ENCODE measurements at regions of chr1 and their contacts with region 1.

Region 1: DNA sequence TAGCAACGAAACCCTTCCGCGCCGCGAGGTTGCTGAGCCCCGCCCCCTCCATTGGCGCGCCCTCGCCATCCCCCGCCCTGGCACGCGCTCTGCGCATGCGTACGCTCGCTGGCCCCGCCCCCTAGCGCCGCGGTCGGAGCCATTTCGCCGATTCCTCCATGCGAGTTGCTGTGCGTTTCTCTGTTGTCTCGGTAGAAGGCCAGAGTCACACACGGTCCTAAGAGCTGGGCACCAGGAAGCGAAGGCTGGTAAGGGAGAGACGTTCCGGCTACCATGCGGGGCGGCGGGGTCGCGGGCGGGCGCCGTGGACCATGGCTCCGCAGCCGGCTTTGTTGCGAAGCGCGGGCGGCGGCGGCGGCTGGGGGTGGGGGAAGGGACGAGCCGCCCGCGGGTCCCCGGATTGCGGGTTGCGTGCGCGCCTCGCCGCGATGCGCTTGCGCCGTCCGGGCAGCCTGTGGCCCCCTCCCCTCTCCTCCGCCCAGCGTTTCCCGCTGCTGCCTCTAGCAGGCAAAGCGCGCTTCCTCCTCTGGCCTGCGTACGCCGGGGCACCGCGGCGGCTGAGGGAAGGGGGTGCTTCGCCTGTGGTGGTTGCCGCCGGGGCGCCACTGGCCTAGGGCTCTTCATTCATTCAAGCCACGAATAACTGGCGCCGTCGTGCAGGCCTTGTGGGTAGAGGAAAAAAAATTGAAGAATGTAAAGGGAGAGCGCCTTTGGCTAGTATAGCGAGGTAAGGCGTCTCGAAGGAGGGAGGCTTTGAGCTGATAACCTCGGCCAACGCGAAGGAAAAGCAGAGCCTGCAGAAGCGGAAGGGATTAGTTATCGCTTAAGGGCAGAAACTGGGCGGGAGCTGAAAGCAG is at the start of gene DHX9:
- DNase-seq: peak; percentile 99
- ATAC-seq: peak; percentile 82
- H3K4me3 Mint-ChIP-seq: peak within 1 kb of the TSS; percentile 92
- H3K27ac Mint-ChIP-seq: peak within 1 kb of the TSS; percentile 98
- H3K4me1 Mint-ChIP-seq: peaks cover 39% of the 10 kb centered on the region
- H3K27me3 Mint-ChIP-seq: no peaks in the 10 kb centered on the region
- CTCF ChIP-seq: no peak
- total RNA-seq, gene DHX9: 265 and 266 TPM in 2 replicates

Region 2: GRCh38 chr1:182029379-182030331 is 809.8 kb before region 1 on chr1:
- CTCF ChIA-PET with region 1: no interaction called
- POLR2A ChIA-PET with region 1: no interaction called
- intact Hi-C with region 1: loop called (anchors 5 kb)
- DNase-seq: peak; percentile 98
- ATAC-seq: peak; percentile 94
- H3K4me3 Mint-ChIP-seq: peak overlapping the region; percentile 97
- H3K27ac Mint-ChIP-seq: peak overlapping the region; percentile 97
- H3K4me1 Mint-ChIP-seq: peaks cover 15% of the 10 kb centered on the region
- H3K27me3 Mint-ChIP-seq: no peaks in the 10 kb centered on the region
- CTCF ChIP-seq: no peak

Region 3: GRCh38 chr1:182588500-182589452 is 250.7 kb before region 1 on chr1 and contains the start of gene RNASEL:
- CTCF ChIA-PET with region 1: no interaction called
- POLR2A ChIA-PET with region 1: no interaction called
- intact Hi-C with region 1: loop called (anchors 5 kb)
- DNase-seq: peak; percentile 39
- ATAC-seq: peak; percentile 90
- H3K4me3 Mint-ChIP-seq: peak within 1 kb of the TSS; percentile 92
- H3K27ac Mint-ChIP-seq: peak within 1 kb of the TSS; percentile 96
- H3K4me1 Mint-ChIP-seq: peaks cover 52% of the 10 kb centered on the region
- H3K27me3 Mint-ChIP-seq: no peaks in the 10 kb centered on the region
- CTCF ChIP-seq: no peak
- total RNA-seq, gene RNASEL: 10.0 and 11.1 TPM in 2 replicates

Region 4: DNA sequence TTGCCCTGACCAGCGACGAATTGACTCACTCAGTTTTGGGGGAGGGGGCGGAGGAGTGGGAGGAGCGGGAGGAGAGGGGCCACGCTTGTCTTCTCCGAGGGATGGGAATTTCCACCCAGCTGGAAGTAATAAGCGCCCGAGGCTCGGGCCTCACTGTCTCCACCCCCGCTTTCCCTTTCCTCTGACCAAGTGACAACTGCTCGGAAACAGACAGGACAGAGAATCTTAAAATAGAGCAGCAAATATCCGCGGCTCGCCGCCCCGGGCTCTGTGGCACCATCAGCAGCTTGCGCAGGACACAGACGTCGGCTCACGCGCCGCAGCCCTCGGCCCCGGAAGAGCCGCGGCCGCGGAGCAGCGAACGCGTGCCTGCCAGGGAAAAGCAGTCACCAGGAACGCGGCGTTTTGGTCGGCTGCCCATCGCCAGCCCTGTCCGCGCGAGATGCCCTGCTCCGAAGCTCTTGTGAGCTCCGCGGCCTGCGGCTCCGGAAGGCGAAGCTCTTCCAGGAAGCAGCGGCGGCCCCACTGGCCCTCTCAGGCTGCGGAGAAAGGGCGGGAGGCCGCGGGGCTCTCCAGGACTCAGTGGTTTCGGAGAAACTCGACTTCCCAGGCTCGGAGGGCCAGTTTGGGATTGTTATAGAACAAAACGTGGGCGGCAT is 224.5 kb before region 1 on chr1:
- CTCF ChIA-PET with region 1: no interaction called
- POLR2A ChIA-PET with region 1: no interaction called
- intact Hi-C with region 1: loop called (anchors 5 kb)
- DNase-seq: peak; percentile 58
- ATAC-seq: peak; percentile 75
- H3K4me3 Mint-ChIP-seq: peak overlapping the region; percentile 87
- H3K27ac Mint-ChIP-seq: peak overlapping the region; percentile 81
- H3K4me1 Mint-ChIP-seq: peaks cover 43% of the 10 kb centered on the region
- H3K27me3 Mint-ChIP-seq: peaks cover 11% of the 10 kb centered on the region
- CTCF ChIP-seq: no peak

Region 5: DNA sequence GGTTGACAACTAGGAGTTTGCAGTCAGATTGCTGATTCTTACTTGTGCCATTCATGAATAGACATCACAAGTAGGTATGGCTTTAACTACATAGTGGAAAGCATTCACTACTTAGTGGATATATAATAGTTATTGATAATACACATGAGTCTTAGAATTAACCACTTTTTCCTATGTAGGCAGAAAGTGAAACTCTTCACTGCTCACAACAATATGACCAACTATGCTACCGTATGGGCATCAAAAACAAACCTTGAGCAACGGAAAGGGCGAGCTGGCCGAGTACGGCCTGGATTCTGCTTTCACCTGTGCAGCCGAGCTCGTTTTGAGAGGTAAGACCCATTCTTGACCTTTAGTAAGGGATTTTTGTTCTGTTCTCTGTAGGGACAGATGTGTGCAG is 38.4 kb after region 1 on chr1:
- CTCF ChIA-PET with region 1: no interaction called
- POLR2A ChIA-PET with region 1: no interaction called
- intact Hi-C with region 1: loop called (anchors 5 kb)
- DNase-seq: no peak
- ATAC-seq: no peak
- H3K4me3 Mint-ChIP-seq: no peak overlapping the region
- H3K27ac Mint-ChIP-seq: no peak overlapping the region
- H3K4me1 Mint-ChIP-seq: no peaks in the 10 kb centered on the region
- H3K27me3 Mint-ChIP-seq: no peaks in the 10 kb centered on the region
- CTCF ChIP-seq: no peak

Region 6: GRCh38 chr1:182897696-182898095 is 58.3 kb after region 1 on chr1:
- CTCF ChIA-PET with region 1: no interaction called
- POLR2A ChIA-PET with region 1: no interaction called
- intact Hi-C with region 1: no loop called
- DNase-seq: no peak
- ATAC-seq: no peak
- H3K4me3 Mint-ChIP-seq: no peak overlapping the region
- H3K27ac Mint-ChIP-seq: no peak overlapping the region
- H3K4me1 Mint-ChIP-seq: no peaks in the 10 kb centered on the region
- H3K27me3 Mint-ChIP-seq: no peaks in the 10 kb centered on the region
- CTCF ChIP-seq: no peak